HepG2 (cell line): ENCODE measurements at regions of chr14 and their contacts with region 1.

Region 1: GRCh38 chr14:32076278-32077080 is 625 bp upstream of the ARHGAP5 start:
- DNase-seq: peak; percentile 98
- ATAC-seq: peak; percentile 78
- H3K4me3 ChIP-seq: peak overlapping the region; percentile 90 to 99 (median 99)
- H3K27ac ChIP-seq: peak overlapping the region; percentile 86
- H3K4me1 ChIP-seq: peaks cover 39% of the 10 kb centered on the region
- H3K27me3 ChIP-seq: peaks cover 0 to 6% of the 10 kb centered on the region in 2 experiments; a peak in 1 of 5 replicates
- CTCF ChIP-seq: 0 out of 2 replicates have a peak, but pooled peaks have one; percentile 13
- EP300 ChIP-seq: peak in 1 of 2 experiments; percentile 54; a peak in 1 of 4 replicates
- POLR2A ChIP-seq: no peak; a peak in 2 of 4 replicates
- RAD21 ChIP-seq: no peak; the same call in none of the 2 replicates

Region 2: DNA sequence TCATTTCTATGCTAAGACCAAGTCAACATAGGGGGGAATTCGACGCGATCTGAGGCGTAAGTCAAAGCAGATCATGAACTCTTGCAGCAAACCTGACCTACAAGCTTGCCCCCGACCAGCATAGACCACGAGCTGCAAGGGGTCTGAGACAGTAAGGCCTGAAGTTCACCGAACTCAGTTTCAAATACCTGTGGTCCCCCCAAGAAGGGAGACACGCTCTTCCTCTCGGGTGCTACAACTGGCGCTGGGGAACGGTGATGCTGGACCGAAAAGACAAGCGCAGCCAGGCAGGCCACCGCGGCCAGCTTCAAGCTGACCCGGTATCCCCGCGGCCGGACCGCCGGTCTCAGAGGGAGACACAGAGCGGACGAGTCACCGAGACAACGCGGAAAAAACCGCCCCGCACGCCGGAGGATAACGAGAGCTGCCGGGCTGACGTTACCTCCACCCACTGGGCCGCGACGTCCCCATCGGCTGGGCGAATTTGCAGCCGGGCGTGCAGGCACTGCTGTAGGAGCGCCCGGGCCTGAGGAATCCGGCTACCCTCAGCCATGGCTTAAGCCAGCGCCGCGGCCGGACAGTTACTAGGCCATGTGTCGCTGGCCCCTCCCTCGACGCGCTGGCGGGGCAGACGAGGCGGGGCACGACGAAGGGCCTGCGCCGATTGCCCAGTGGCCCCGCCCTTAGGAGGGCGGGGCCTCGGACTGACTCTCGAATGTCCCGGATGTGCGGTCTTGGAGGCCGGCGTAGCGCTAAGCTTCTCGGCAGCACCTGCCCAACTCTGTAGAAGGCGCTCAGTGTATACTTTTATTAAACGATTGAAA is 619.4 kb before region 1 on chr14 and contains the start of gene DTD2:
- CTCF ChIA-PET with region 1: no interaction called
- POLR2A ChIA-PET with region 1: interaction called, 15 read pairs
- in situ Hi-C with region 1: no loop called
- intact Hi-C with region 1: loop called (anchors 1 kb)
- DNase-seq: peak; percentile 98
- ATAC-seq: peak; percentile 98
- H3K4me3 ChIP-seq: peak within 1 kb of the TSS; percentile 74 to 88 (median 84)
- H3K27ac ChIP-seq: peak within 1 kb of the TSS; percentile 87
- H3K4me1 ChIP-seq: peaks cover 21% of the 10 kb centered on the region
- H3K27me3 ChIP-seq: no peaks in the 10 kb centered on the region; a peak in 1 of 5 replicates
- CTCF ChIP-seq: no peak
- EP300 ChIP-seq: peak; percentile 22 to 60; a peak in 2 of 4 replicates
- POLR2A ChIP-seq: peak; percentile 98 to 99
- RAD21 ChIP-seq: peak; percentile 79
- total RNA-seq, gene DTD2: 49.8 and 68.8 TPM in 2 replicates

Region 3: DNA sequence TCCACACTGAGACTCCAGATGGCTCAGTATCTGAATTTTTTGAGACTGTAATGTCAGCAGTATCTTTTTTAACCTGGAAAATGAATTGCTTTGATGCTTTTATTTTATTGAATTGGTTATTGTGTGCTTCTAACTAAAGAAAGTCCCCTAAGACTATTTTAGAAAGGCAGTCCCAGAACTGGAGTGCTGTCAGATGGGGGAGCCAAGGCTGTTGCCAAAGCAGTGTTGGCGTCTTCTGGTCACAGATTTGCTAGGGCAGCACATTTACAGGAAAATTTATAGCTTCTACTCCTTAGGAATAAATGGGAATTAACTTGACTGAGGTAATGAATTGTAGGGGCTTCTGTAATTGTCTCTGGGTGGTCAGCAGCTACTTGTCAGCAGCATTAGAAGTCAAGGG is 156.5 kb before region 1 on chr14:
- CTCF ChIA-PET with region 1: no interaction called
- POLR2A ChIA-PET with region 1: no interaction called
- in situ Hi-C with region 1: no loop called
- intact Hi-C with region 1: no loop called
- DNase-seq: no peak
- ATAC-seq: no peak
- H3K4me3 ChIP-seq: no peak overlapping the region
- H3K27ac ChIP-seq: no peak overlapping the region
- H3K4me1 ChIP-seq: no peaks in the 10 kb centered on the region
- H3K27me3 ChIP-seq: no peaks in the 10 kb centered on the region; a peak in 1 of 5 replicates
- CTCF ChIP-seq: no peak
- EP300 ChIP-seq: no peak
- POLR2A ChIP-seq: no peak
- RAD21 ChIP-seq: no peak

Region 4: GRCh38 chr14:31937721-31938346 is 138.6 kb before region 1 on chr14:
- CTCF ChIA-PET with region 1: interaction called, 9 read pairs
- POLR2A ChIA-PET with region 1: interaction called, 10 read pairs
- in situ Hi-C with region 1: loop called (anchors 5 kb)
- intact Hi-C with region 1: loop called (anchors 1 kb)
- DNase-seq: peak; percentile 98
- ATAC-seq: peak; percentile 88
- H3K4me3 ChIP-seq: no peak overlapping the region
- H3K27ac ChIP-seq: no peak overlapping the region
- H3K4me1 ChIP-seq: peaks cover 59% of the 10 kb centered on the region
- H3K27me3 ChIP-seq: no peaks in the 10 kb centered on the region
- CTCF ChIP-seq: no peak
- EP300 ChIP-seq: peak; percentile 33 to 84; a peak in 1 of 4 replicates
- POLR2A ChIP-seq: no peak
- RAD21 ChIP-seq: no peak

Region 5: GRCh38 chr14:32121948-32122347 is 45.5 kb after region 1 on chr14:
- CTCF ChIA-PET with region 1: no interaction called
- POLR2A ChIA-PET with region 1: no interaction called
- in situ Hi-C with region 1: no loop called
- intact Hi-C with region 1: loop called (anchors 5 kb)
- DNase-seq: no peak
- ATAC-seq: no peak
- H3K4me3 ChIP-seq: no peak overlapping the region
- H3K27ac ChIP-seq: no peak overlapping the region
- H3K4me1 ChIP-seq: 0 out of 2 replicates have a peak, but pooled peaks cover 5% of the 10 kb centered on the region
- H3K27me3 ChIP-seq: no peaks in the 10 kb centered on the region
- CTCF ChIP-seq: no peak
- EP300 ChIP-seq: no peak
- POLR2A ChIP-seq: no peak
- RAD21 ChIP-seq: no peak

Region 6: GRCh38 chr14:32252030-32252670 is 175.7 kb after region 1 on chr14:
- CTCF ChIA-PET with region 1: interaction called, 216 read pairs
- POLR2A ChIA-PET with region 1: interaction called, 18 read pairs
- in situ Hi-C with region 1: loop called (anchors 5 kb)
- intact Hi-C with region 1: loop called (anchors 1 kb)
- DNase-seq: peak; percentile 89
- ATAC-seq: peak; percentile 88
- H3K4me3 ChIP-seq: no peak overlapping the region
- H3K27ac ChIP-seq: no peak overlapping the region
- H3K4me1 ChIP-seq: no peaks in the 10 kb centered on the region
- H3K27me3 ChIP-seq: no peaks in the 10 kb centered on the region
- CTCF ChIP-seq: peak; percentile 99
- EP300 ChIP-seq: no peak; a peak in 1 of 4 replicates
- POLR2A ChIP-seq: no peak
- RAD21 ChIP-seq: peak; percentile 97